Right lobe of liver (tissue), 6 donors: ENCODE measurements at regions of chr15 and their contacts with region 1.

Region 1: GRCh38 chr15:96345560-96346399 is 15.3 kb downstream of the NR2F2 start:
- DNase-seq: peak; percentile 72 to 78 (median 74)
- ATAC-seq: peak; percentile 82 to 88 (median 84)
- H3K4me3 ChIP-seq: peak overlapping the region; percentile 26 to 55 (median 36)
- H3K27ac ChIP-seq: peak overlapping the region; percentile 90 to 97 (median 91)
- H3K4me1 ChIP-seq: peaks cover 0 to 6% (median 3%) of the 10 kb centered on the region in 4 donors
- H3K27me3 ChIP-seq: no peaks in the 10 kb centered on the region
- CTCF ChIP-seq: peak; percentile 60 to 67 (median 64)
- POLR2A ChIP-seq: no peak

Region 2: GRCh38 chr15:96181873-96182301 is 163.9 kb before region 1 on chr15:
- intact Hi-C with region 1: loop called in 1 of 2 experiments (anchors 10 kb)
- DNase-seq: peak; percentile 57 to 79 (median 77)
- ATAC-seq: peak; percentile 66 to 72 (median 70)
- H3K4me3 ChIP-seq: no peak overlapping the region
- H3K27ac ChIP-seq: peak overlapping the region in 2 of 3 donors; percentile 89 to 92
- H3K4me1 ChIP-seq: peaks cover 0 to 38% (median 12%) of the 10 kb centered on the region in 4 donors
- H3K27me3 ChIP-seq: no peaks in the 10 kb centered on the region
- CTCF ChIP-seq: no peak
- POLR2A ChIP-seq: no peak

Region 3: DNA sequence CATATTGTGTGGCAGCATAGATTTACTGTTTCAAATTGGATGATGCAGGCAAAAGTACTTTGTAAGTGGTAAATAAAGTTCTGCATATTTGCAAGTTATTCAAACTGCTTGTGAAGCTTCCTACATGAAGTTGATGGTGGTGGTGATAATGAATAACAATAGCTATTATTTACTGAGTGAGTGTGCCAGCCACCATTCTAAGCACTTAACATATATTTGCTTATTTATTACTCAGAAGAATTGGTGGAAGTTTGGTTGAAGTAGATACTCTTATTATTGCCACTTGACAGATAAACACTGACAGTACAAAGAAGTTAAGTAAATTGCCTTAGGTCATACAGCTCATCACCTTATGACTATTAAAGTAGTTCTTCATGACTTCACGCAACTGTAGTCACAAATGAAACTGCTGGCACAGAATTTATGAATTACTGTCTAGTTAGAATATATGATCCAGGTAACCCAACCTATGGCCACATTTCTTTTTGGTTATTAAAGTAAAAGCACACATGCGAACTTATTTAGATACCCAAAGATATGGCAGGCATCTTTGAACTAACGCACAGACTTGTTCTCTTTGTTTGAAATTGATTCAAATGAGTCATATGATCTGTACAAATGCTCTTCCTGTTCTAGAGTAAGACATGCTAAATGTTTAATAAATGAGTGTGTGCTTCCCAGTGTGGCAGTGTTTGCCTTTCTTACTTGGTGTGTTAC is 115.2 kb before region 1 on chr15:
- intact Hi-C with region 1: no loop called
- DNase-seq: no peak
- ATAC-seq: peak in 1 of 4 donors; percentile 28
- H3K4me3 ChIP-seq: no peak overlapping the region
- H3K27ac ChIP-seq: no peak overlapping the region
- H3K4me1 ChIP-seq: peaks cover 0 to 9% (median 2%) of the 10 kb centered on the region in 4 donors
- H3K27me3 ChIP-seq: no peaks in the 10 kb centered on the region
- CTCF ChIP-seq: no peak
- POLR2A ChIP-seq: no peak